Dorsolateral prefrontal cortex (tissue), 120 donors: ENCODE measurements at regions of chr10 and their contacts with region 1.

Region 1: GRCh38 chr10:22670788-22671187 is 43.6 kb downstream of the PIP4K2A start:
- DNase-seq: peak in 2 of 10 donors; percentile 29 to 43
- H3K4me3 ChIP-seq: peak overlapping the region in 9 of 59 donors; percentile 0 to 38 (median 20)
- H3K27ac ChIP-seq: peak overlapping the region in 49 of 59 donors; percentile 0 to 94 (median 52)
- H3K27me3 ChIP-seq: no peaks in the 10 kb centered on the region
- CTCF ChIP-seq: no peak

Region 2: DNA sequence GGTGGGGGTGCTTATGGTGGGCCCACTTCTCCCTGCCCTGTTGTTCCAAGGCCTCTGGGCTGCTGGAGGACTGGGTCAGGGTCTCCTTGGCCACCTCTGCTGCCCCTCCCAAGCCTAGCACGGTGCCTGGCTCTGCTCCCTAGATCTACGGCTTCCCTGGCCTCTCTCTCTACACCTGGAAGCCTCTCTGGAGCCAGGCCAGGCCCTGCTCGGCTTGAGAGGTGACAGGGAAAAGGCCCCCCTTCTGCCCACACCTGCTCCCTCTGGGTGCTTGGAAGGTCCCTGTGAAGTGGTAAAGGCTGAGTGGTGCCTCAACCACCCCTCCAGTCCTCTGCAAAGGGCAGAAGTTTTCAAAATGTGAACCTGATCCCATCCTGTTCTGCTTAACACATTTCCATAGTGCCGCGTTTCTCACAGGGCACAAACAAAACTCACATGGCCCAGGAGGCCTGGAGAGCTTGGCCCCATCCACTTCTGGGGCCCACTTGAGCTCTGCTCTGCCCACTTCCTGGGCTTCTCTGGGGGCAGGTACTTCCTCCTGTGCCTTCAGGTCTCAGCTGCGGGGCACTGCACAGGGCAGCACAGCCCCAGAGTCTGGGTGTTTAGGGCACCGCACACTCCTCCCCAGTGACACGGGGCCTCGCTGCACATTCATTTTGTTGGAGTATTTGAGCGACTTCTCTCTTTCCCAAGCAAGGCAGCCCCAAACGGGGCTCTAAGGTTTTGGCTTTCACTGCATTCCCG is 126.3 kb before region 1 on chr10:
- intact Hi-C with region 1: no loop called
- DNase-seq: no peak
- H3K4me3 ChIP-seq: no peak overlapping the region
- H3K27ac ChIP-seq: peak overlapping the region in 29 of 59 donors; percentile 2 to 68 (median 41)
- H3K27me3 ChIP-seq: no peaks in the 10 kb centered on the region
- CTCF ChIP-seq: no peak

Region 3: DNA sequence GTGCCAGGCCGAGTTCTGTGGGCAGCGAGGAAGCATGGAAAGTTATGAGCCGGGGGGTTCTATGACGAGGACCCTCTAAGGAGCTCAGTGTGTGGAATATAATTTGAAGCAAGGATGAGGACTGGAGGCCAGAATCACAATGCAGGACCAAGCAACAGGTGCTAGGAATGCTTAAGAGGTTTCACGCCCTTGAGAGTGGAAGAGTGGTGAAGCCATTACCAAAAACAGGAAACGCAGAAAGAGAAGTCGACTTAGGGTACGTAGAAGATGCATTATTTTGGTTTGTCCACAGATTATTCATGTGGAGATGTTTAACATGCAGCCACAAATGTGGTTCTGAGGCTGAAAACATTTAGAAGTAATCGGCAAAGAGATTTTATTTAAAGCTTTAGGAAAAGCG is 35.1 kb before region 1 on chr10:
- intact Hi-C with region 1: loop called in 1 of 2 experiments (anchors 5 kb)
- DNase-seq: no peak
- H3K4me3 ChIP-seq: no peak overlapping the region
- H3K27ac ChIP-seq: peak overlapping the region in 44 of 59 donors; percentile 1 to 98 (median 92)
- H3K27me3 ChIP-seq: no peaks in the 10 kb centered on the region
- CTCF ChIP-seq: no peak

Region 4: GRCh38 chr10:22704471-22704911 is 33.7 kb after region 1 on chr10:
- intact Hi-C with region 1: loop called in 1 of 2 experiments (anchors 5 kb)
- DNase-seq: no peak
- H3K4me3 ChIP-seq: peak overlapping the region in 11 of 59 donors; percentile 0 to 28 (median 6)
- H3K27ac ChIP-seq: peak overlapping the region in 23 of 59 donors; percentile 4 to 96 (median 46)
- H3K27me3 ChIP-seq: no peaks in the 10 kb centered on the region
- CTCF ChIP-seq: no peak